Motor neuron (in vitro differentiated cells): ENCODE measurements at regions of chr3 and their contacts with region 1.

Region 1: DNA sequence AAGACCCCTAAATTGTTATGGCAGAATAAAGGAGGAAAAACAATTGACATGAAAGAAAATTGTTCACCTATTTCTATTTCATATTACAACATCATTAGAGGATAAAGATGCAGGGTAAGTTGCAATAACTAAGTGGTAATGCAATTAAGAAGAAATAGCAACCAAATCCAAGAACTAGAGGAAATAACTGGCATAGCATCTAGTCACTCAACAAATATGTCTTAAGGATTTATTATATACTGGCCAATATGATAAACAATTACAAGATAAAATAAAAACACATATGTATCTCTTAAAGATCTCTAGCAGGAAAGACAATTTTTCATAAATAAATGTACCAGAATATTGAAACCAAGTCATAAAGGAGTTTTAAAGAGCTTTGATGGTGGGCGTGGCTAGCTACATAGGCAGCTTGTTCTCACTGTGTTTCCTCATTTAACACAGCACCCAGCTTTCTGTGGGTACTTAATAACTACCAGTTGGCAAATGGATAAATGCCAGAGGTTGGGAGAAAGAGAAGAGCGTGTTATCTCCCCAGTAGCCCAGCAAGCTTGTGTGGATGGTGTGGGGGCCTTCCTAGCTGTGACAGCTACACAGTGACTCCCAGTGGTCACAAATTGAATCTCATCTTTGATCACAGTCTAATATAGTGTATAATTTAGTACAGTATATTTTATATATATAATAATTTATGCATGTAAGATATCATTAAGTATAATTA is 983.9 kb downstream of the EPHA3 start:
- ATAC-seq: peak in 7 of 8 experiments; percentile 40 to 93 (median 86)
- H3K4me3 ChIP-seq: no peak overlapping the region
- H3K27ac ChIP-seq: no peak overlapping the region
- H3K4me1 ChIP-seq: no peaks in the 10 kb centered on the region

Region 2: DNA sequence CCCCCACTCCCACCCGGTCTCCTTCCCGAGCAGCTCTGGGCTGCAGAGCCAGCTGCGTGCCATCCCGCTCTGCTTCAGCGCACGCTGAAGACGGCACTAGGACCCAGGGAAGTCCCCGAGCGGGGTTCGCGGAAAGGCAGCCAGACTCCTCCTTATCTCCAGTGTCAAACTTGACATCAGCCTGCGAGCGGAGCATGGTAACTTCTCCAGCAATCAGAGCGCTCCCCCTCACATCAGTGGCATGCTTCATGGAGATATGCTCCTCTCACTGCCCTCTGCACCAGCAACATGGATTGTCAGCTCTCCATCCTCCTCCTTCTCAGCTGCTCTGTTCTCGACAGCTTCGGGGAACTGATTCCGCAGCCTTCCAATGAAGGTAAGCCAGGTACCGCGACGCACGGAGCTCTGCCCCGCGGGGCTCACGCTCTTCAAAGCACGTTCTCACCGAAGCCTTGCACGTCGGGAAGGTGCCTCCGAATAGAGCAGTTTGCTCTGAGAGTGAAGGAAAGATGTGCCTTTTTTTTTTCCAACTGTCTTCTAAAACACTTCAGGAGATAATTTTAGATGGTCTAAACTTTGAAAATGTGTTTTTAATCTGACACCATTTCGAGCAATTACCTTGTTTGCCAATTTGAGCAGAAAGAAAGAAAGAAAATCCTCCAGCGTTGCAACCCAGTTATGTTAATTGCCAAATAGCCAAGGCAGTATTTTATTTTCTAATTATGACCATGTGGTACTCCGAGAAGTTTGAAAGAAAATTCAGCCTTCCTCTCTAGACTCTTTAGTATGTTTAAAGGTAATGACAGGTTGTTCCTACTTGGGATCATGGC is 983.7 kb before region 1 on chr3 and contains the start of gene EPHA3:
- in situ Hi-C with region 1: loop called in 1 of 9 experiments (anchors 25 kb)
- ATAC-seq: peak; percentile 97 to 100 (median 98)
- H3K4me3 ChIP-seq: peak within 1 kb of the TSS; percentile 41 to 77 (median 53)
- H3K27ac ChIP-seq: no peak within 1 kb of the TSS
- H3K4me1 ChIP-seq: peaks cover 0 to 9% of the 10 kb centered on the region in 2 donors
- total RNA-seq, gene EPHA3: 0.36 to 84.3 (median 42.7) TPM in 7 of 8 experiments, not detected in the other

Region 3: GRCh38 chr3:89467898-89468363 is 623.4 kb before region 1 on chr3:
- in situ Hi-C with region 1: no loop called
- ATAC-seq: peak; percentile 22 to 100 (median 86)
- H3K4me3 ChIP-seq: no peak overlapping the region
- H3K27ac ChIP-seq: no peak overlapping the region
- H3K4me1 ChIP-seq: peaks cover 0 to 11% of the 10 kb centered on the region in 2 donors